ENCODE measurements at regions of chr5 and their contacts with region 1.

Region 1: DNA sequence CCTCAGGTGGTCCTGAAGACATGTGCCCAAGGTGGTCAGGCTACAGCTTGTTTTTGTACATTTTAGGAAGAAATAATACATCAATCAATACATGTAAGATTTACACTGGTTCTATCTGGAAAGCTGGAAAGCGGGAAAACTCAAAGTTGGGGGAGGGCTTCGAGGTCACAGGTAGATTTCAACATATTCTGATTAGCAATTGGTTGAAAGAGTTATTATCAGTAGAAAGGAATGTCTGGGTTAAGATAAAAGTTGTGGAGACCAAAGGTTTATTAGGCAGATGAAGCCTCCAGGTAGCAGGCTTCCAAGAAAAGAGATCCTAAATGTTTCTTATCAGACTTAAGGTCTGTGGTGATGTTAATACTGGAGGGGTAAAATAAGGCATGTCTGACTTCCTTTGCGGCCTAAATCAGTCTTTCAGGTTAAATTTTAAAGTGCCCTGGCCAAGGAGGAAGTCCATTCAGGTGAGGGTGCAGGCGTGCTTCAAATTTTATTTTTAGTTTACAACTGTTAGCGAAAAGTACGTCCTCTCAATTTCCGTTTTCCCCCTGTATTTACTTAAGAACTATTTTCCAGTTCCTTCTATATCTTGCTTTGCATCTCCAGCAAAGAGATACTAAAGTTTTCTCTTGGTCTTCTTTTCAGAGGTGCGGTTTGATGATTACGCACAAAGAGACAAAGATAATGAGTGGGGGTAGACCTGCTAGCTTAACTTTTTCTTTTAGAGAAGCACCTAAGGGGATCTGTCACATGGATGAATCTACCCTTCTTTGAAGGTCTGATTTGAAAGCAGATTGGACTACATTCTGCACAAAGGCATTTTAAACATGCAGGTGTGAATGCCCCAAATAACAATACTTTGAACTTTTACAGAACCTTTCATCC is 578.6 kb downstream of the RAB3C start:
- DNase-seq: no peak
- H3K4me3 Mint-ChIP-seq: no peak overlapping the region
- H3K27ac Mint-ChIP-seq: peak overlapping the region; percentile 48
- H3K4me1 Mint-ChIP-seq: peaks cover 34% of the 10 kb centered on the region
- H3K27me3 Mint-ChIP-seq: no peaks in the 10 kb centered on the region

Region 2: DNA sequence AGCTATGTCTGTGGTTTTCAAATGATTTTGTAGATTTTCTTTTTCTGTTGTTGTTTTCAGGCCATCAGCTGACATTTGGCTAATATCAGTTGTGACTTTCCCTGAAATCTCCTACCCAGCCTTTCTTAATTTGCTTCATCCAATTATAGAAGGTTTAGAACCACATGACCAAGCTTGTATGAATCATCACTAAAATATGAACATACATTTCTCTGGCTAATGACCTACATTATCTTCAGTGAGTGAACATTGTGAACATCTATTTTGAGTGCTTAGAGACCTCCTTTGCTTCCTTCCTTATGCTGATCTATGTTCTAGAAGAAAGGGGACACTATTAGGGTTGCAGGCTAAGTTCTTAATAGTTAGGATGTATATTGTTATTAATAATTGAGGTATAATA is 46.1 kb before region 1 on chr5:
- intact Hi-C with region 1: no loop called
- DNase-seq: no peak
- H3K4me3 Mint-ChIP-seq: no peak overlapping the region
- H3K27ac Mint-ChIP-seq: no peak overlapping the region
- H3K4me1 Mint-ChIP-seq: peaks cover 14% of the 10 kb centered on the region
- H3K27me3 Mint-ChIP-seq: no peaks in the 10 kb centered on the region

Region 3: DNA sequence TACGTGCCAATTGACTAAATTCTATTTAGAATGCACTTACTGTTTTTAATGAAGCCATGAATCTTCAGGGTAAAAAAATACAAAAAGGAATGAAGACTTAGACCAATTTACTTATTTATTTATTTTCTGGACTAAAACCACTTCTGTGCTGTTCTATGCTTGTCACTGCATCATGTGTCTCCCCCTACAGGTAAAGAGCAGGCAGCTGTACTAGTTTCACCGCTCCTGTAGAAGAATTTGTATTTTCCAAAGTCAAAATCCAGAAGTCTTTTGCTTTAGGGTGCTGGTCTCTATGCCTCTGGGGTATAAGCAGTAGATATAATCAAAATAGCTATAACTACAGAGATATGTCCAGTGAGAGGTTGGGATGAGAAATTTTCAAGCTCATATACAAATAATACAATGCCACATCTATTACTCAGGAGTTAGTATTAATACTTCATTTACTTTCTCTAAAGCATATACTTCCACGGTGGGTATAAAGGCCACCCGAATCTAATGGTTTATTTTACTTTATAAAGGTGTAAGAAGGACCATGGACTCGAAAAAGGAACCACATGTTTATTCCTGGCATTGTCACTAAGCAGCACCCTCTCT is 12.9 kb after region 1 on chr5:
- intact Hi-C with region 1: loop called (anchors 2 kb)
- DNase-seq: no peak
- H3K4me3 Mint-ChIP-seq: no peak overlapping the region
- H3K27ac Mint-ChIP-seq: no peak overlapping the region
- H3K4me1 Mint-ChIP-seq: peaks cover 43% of the 10 kb centered on the region
- H3K27me3 Mint-ChIP-seq: no peaks in the 10 kb centered on the region

Region 4: GRCh38 chr5:59342181-59342580 is 180.7 kb after region 1 on chr5:
- intact Hi-C with region 1: no loop called
- DNase-seq: no peak
- H3K4me3 Mint-ChIP-seq: no peak overlapping the region
- H3K27ac Mint-ChIP-seq: no peak overlapping the region
- H3K4me1 Mint-ChIP-seq: peaks cover 3% of the 10 kb centered on the region
- H3K27me3 Mint-ChIP-seq: peaks cover 30% of the 10 kb centered on the region

Measured in activated T-helper 2 cell treated with anti-CD3 and anti-CD28 coated beads, Interferon-gamma antibody, Interleukin-2, Interleukin-4, amounts not matched to agents 10 μg/mL and 5 μg/mL and 100 μg/mL, durations not matched to agents 14 hours and 24 hours and 36 hours (primary cell).